Activated CD4-positive, alpha-beta memory T cell treated with anti-CD3 and anti-CD28 coated beads for 36 hours (primary cell): ENCODE measurements at regions of chr3 and their contacts with region 1.

Region 1: GRCh38 chr3:194486540-194487288 is at the start of gene ATP13A3:
- DNase-seq: peak; percentile 92
- H3K4me3 Mint-ChIP-seq: peak within 1 kb of the TSS; percentile 92
- H3K27ac Mint-ChIP-seq: peak within 1 kb of the TSS; percentile 95
- H3K4me1 Mint-ChIP-seq: peaks cover 58% of the 10 kb centered on the region
- H3K27me3 Mint-ChIP-seq: no peaks in the 10 kb centered on the region
- total RNA-seq, gene ATP13A3: 136 to 145 TPM

Region 2: DNA sequence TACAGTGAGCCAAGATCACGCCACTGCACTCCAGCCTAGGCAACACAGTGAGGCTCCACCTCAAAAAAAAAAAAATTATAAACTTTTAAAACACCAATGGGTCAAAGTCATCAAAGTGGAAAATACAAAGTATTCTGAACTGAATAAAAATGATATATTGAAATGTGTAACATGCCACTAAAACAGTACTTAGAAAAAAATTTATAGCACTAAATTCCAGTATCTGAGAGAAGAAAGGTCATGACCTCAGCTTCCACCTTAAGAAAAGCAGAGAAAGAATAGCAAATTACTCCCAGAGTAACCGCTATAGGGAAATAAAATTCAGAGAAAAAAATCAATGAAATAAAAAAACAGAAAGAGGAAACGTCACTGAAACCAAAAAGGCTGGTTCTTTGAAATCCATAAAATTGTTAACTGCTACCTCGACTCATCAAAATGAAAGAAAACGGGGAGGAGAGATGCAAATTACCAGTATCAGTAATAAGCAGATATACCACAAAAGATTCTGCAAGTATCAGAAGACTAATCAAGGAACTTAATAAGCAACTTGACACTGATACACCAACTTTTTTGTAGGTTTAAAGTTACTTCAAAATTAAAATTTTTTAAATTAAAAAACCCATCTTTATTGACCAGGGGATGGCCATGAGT is 20.7 kb before region 1 on chr3:
- CTCF ChIA-PET with region 1: interaction called, 37 read pairs
- POLR2A ChIA-PET with region 1: interaction called, 3 read pairs
- intact Hi-C with region 1: loop called (anchors 1 kb)
- DNase-seq: no peak
- H3K4me3 Mint-ChIP-seq: peak overlapping the region; percentile 4
- H3K27ac Mint-ChIP-seq: peak overlapping the region; percentile 69
- H3K4me1 Mint-ChIP-seq: peaks cover 32% of the 10 kb centered on the region
- H3K27me3 Mint-ChIP-seq: no peaks in the 10 kb centered on the region

Region 3: GRCh38 chr3:194497821-194498598 is 11.3 kb after region 1 on chr3:
- CTCF ChIA-PET with region 1: interaction called, 7 read pairs
- POLR2A ChIA-PET with region 1: interaction called, 4 read pairs
- intact Hi-C with region 1: loop called (anchors 1 kb)
- DNase-seq: peak; percentile 34
- H3K4me3 Mint-ChIP-seq: no peak overlapping the region
- H3K27ac Mint-ChIP-seq: no peak overlapping the region
- H3K4me1 Mint-ChIP-seq: peaks cover 19% of the 10 kb centered on the region
- H3K27me3 Mint-ChIP-seq: no peaks in the 10 kb centered on the region

Region 4: DNA sequence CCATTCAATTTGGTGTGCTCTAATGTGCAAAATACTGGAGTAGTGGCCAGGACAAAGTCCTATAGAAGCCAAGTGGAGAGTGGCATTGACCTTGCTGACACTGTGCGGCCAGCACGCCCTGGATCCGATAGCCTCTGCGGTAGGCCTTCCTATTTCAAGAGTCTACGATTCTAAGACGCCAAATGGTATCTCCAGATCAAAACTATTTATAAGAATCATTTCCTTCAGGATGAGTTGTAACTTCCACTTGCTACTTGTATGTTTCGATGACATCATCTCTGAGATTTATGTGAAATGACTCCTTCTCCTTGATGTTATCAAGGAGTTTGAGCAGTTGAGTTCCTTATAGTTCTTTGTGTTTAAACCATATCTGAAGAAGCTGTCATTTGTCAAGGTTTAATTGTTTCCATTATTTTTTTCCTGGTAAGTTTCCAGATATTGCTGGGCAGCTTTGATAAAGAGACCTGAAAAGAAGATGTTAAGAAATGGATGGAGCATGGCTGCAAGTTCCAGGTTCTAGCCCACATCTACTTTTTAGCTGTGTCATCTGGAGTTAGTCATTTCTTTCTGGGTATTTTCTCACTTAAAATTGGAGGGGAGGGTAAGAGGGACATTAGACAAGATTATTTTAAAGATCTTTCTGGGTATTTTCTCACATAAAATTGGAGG is 74.7 kb after region 1 on chr3:
- CTCF ChIA-PET with region 1: no interaction called
- POLR2A ChIA-PET with region 1: interaction called, 3 read pairs
- intact Hi-C with region 1: loop called (anchors 2 kb)
- DNase-seq: no peak
- H3K4me3 Mint-ChIP-seq: no peak overlapping the region
- H3K27ac Mint-ChIP-seq: peak overlapping the region; percentile 2
- H3K4me1 Mint-ChIP-seq: peaks cover 18% of the 10 kb centered on the region
- H3K27me3 Mint-ChIP-seq: peaks cover 12% of the 10 kb centered on the region

Region 5: GRCh38 chr3:194769020-194769643 is 282.4 kb after region 1 on chr3:
- CTCF ChIA-PET with region 1: no interaction called
- POLR2A ChIA-PET with region 1: no interaction called
- intact Hi-C with region 1: loop called (anchors 2 kb)
- DNase-seq: peak; percentile 96
- H3K4me3 Mint-ChIP-seq: peak overlapping the region; percentile 68
- H3K27ac Mint-ChIP-seq: peak overlapping the region; percentile 70
- H3K4me1 Mint-ChIP-seq: peaks cover 19% of the 10 kb centered on the region
- H3K27me3 Mint-ChIP-seq: peaks cover 5% of the 10 kb centered on the region